ENCODE measurements at regions of chr1 and their contacts with region 1.

Region 1: DNA sequence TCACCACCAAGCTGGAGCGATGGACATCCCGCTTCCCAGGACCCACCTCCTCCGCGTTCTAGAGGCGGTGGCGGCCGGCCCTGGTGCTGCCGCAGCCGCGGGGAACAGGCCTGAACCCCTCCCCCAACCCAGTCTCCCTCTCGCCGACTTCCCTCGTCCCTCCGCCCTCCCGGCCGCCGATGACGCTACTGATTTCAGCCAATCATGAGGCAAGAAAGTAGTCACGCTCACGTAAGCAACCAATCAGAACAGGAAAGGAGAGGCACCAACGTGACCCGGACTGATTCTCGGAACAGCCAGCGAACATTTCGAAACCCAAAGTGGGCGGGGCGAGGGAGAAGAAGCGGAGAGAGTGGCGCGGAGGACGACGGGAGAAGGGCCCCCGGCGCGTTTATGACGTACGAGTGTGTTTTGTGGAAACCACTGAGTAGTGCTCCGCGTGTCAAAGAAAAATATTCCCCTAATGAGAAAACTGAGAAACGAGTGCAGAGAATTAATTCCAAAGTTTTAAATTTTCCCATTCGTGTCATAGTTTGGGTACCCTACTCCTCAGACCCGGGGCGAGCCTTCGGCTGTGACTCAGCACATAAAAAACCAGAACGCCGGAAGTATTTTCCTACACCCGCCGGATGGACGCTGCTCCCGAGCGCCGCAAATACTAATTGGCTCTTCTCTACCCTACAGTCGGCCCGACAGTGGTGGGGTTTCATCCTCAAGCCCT is at the start of gene NRDC:
- DNase-seq: peak; percentile 97 to 100 (median 99)
- ATAC-seq: peak; percentile 88
- H3K4me3 ChIP-seq: peak within 1 kb of the TSS; percentile 68
- H3K4me3 Mint-ChIP-seq: no peak within 1 kb of the TSS
- H3K27ac ChIP-seq: peak within 1 kb of the TSS; percentile 89 to 95
- H3K27ac Mint-ChIP-seq: no peak within 1 kb of the TSS
- H3K4me1 ChIP-seq: peaks cover 33% of the 10 kb centered on the region
- H3K4me1 Mint-ChIP-seq: peaks cover 27% of the 10 kb centered on the region
- H3K27me3 ChIP-seq: peaks cover 2 to 3% of the 10 kb centered on the region in 2 experiments
- H3K27me3 Mint-ChIP-seq: peaks cover 13% of the 10 kb centered on the region
- CTCF ChIP-seq: no peak
- total RNA-seq, gene NRDC: 59.0 to 62.4 TPM

Region 2: GRCh38 chr1:51519048-51519864 is 359.5 kb before region 1 on chr1 and contains the start of gene EPS15:
- CTCF ChIA-PET with region 1: no interaction called
- POLR2A ChIA-PET with region 1: no interaction called
- intact Hi-C with region 1: loop called in 1 of 2 experiments (anchors 10 kb)
- DNase-seq: peak; percentile 73 to 92 (median 82)
- ATAC-seq: peak; percentile 69
- H3K4me3 ChIP-seq: peak within 1 kb of the TSS; percentile 76
- H3K4me3 Mint-ChIP-seq: peak within 1 kb of the TSS; percentile 94
- H3K27ac ChIP-seq: peak within 1 kb of the TSS; percentile 48 to 50
- H3K27ac Mint-ChIP-seq: peak within 1 kb of the TSS; percentile 88
- H3K4me1 ChIP-seq: peaks cover 24% of the 10 kb centered on the region
- H3K4me1 Mint-ChIP-seq: peaks cover 59% of the 10 kb centered on the region
- H3K27me3 ChIP-seq: no peaks in the 10 kb centered on the region
- H3K27me3 Mint-ChIP-seq: no peaks in the 10 kb centered on the region
- CTCF ChIP-seq: no peak
- total RNA-seq, gene EPS15: 44.5 to 47.9 TPM

Region 3: DNA sequence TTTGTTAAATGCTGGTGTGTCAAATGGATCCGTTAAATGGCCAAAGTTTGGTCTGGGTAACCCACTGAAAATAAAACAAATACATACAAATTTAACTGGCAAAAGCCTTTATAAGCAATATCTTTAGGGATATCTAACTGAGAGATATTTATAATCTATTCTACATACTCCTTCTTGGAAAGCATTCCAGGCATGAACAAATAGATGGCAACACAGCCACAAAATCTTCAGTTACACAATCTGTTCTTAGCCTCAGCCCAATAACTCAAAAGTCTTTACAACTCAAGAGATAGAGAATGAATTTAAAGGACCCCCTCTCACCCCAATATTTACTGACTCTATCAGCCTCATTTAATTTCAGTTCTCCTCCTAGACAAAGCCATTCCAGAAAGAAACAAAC is 59.0 kb before region 1 on chr1:
- CTCF ChIA-PET with region 1: no interaction called
- POLR2A ChIA-PET with region 1: no interaction called
- intact Hi-C with region 1: loop called in 1 of 2 experiments (anchors 2 kb)
- DNase-seq: no peak
- ATAC-seq: no peak
- H3K4me3 ChIP-seq: no peak overlapping the region
- H3K4me3 Mint-ChIP-seq: no peak overlapping the region
- H3K27ac ChIP-seq: no peak overlapping the region
- H3K27ac Mint-ChIP-seq: no peak overlapping the region
- H3K4me1 ChIP-seq: no peaks in the 10 kb centered on the region
- H3K4me1 Mint-ChIP-seq: no peaks in the 10 kb centered on the region
- H3K27me3 ChIP-seq: no peaks in the 10 kb centered on the region
- H3K27me3 Mint-ChIP-seq: no peaks in the 10 kb centered on the region
- CTCF ChIP-seq: no peak

Region 4: DNA sequence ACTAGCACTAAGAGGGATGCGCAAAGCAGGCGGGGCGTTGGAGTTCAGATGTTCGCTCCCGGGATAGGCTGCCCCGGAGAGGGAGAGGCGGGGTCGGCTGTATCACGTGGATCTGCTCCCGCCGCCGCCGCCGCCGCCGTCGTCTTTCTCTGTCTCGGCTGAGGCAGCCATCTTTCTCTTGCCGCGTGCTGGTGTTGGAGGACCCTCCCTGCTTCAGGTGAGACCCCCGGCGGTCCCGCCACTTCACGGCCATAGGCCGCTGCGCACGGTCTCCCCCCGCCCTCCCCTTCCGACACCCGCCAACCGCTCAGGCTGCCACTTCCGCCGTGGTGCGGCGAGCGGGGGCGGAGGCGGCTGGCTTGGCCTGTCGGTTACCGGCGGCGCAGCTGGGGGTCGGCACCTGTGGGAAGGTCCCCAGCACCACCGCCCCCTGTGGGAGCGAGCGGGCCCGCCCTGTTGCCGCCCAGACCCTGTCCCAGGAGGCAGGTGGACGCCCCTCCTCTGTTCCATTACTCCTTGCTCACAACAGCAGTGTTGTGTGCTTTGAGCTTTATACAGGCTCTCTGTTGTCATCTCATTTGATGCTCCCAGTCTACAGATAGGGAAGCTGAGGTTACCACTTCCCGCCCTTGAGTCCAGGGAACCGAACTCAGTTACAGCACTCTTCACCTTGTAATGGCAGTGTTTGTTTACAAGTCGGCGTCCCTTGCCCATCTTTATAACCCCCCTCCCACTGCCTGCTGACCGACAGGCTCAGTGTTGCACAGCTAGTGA is 177.6 kb after region 1 on chr1 and contains the start of gene BTF3L4:
- CTCF ChIA-PET with region 1: no interaction called
- POLR2A ChIA-PET with region 1: interaction called, 5 read pairs
- intact Hi-C with region 1: loop called in 1 of 2 experiments (anchors 1 kb)
- DNase-seq: peak; percentile 85 to 95 (median 90)
- ATAC-seq: peak; percentile 96
- H3K4me3 ChIP-seq: peak within 1 kb of the TSS; percentile 88
- H3K4me3 Mint-ChIP-seq: peak within 1 kb of the TSS; percentile 97
- H3K27ac ChIP-seq: peak within 1 kb of the TSS; percentile 83 to 84
- H3K27ac Mint-ChIP-seq: peak within 1 kb of the TSS; percentile 92
- H3K4me1 ChIP-seq: peaks cover 26% of the 10 kb centered on the region
- H3K4me1 Mint-ChIP-seq: peaks cover 71% of the 10 kb centered on the region
- H3K27me3 ChIP-seq: no peaks in the 10 kb centered on the region
- H3K27me3 Mint-ChIP-seq: no peaks in the 10 kb centered on the region
- CTCF ChIP-seq: no peak
- total RNA-seq, gene BTF3L4: 29.4 to 34.1 TPM

Region 5: GRCh38 chr1:52552505-52553361 is 674.0 kb after region 1 on chr1 and contains the start of gene TUT4:
- CTCF ChIA-PET with region 1: no interaction called
- POLR2A ChIA-PET with region 1: no interaction called
- intact Hi-C with region 1: no loop called
- DNase-seq: peak; percentile 58 to 89 (median 70)
- ATAC-seq: peak; percentile 35
- H3K4me3 ChIP-seq: peak within 1 kb of the TSS; percentile 92
- H3K4me3 Mint-ChIP-seq: peak within 1 kb of the TSS; percentile 84
- H3K27ac ChIP-seq: peak within 1 kb of the TSS; percentile 91 to 94
- H3K27ac Mint-ChIP-seq: peak within 1 kb of the TSS; percentile 90
- H3K4me1 ChIP-seq: peaks cover 18% of the 10 kb centered on the region
- H3K4me1 Mint-ChIP-seq: peaks cover 47% of the 10 kb centered on the region
- H3K27me3 ChIP-seq: no peaks in the 10 kb centered on the region
- H3K27me3 Mint-ChIP-seq: no peaks in the 10 kb centered on the region
- CTCF ChIP-seq: peak; percentile 23
- total RNA-seq, gene TUT4: 141 to 147 TPM

Region 6: GRCh38 chr1:52726265-52727113 is 847.7 kb after region 1 on chr1 and contains the start of gene ZYG11B:
- CTCF ChIA-PET with region 1: no interaction called
- POLR2A ChIA-PET with region 1: no interaction called
- intact Hi-C with region 1: loop called in 1 of 2 experiments (anchors 5 kb)
- DNase-seq: peak; percentile 85 to 96 (median 92)
- ATAC-seq: peak; percentile 91
- H3K4me3 ChIP-seq: peak within 1 kb of the TSS; percentile 79
- H3K4me3 Mint-ChIP-seq: peak within 1 kb of the TSS; percentile 95
- H3K27ac ChIP-seq: peak within 1 kb of the TSS in 1 of 2 donors; percentile 45
- H3K27ac Mint-ChIP-seq: peak within 1 kb of the TSS; percentile 77
- H3K4me1 ChIP-seq: peaks cover 36% of the 10 kb centered on the region
- H3K4me1 Mint-ChIP-seq: peaks cover 54% of the 10 kb centered on the region
- H3K27me3 ChIP-seq: no peaks in the 10 kb centered on the region
- H3K27me3 Mint-ChIP-seq: no peaks in the 10 kb centered on the region
- CTCF ChIP-seq: no peak
- total RNA-seq, gene ZYG11B: 14.1 to 16.1 TPM

Measured in CD4-positive, alpha-beta T cell (primary cell).